CD8-positive, alpha-beta T cell (primary cell): ENCODE measurements at regions of chr5 and their contacts with region 1.

Region 1: DNA sequence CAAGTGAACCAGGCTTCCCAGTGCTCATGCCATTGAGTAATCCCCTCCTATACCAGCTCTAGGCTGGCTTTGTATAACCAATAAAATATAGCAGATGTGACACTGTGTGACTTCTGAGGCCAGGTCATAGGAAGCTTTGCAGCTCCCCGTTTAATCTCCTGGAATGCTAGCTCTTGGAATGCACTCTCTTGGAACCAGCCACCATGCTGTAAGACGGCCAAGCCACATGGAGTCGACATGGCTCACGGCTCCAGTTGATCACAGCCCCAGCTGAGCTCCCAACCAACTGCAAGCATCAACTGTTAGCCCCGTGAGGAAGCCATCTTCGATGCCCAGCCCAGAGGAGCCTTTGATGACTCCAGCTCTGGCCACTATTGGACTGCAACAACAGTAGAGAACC is 74.5 kb downstream of the SH3TC2 start:
- DNase-seq: no peak
- ATAC-seq: no peak
- H3K4me3 ChIP-seq: no peak overlapping the region
- H3K4me3 Mint-ChIP-seq: no peak overlapping the region
- H3K27ac ChIP-seq: no peak overlapping the region
- H3K27ac Mint-ChIP-seq: no peak overlapping the region
- H3K4me1 ChIP-seq: no peaks in the 10 kb centered on the region
- H3K4me1 Mint-ChIP-seq: no peaks in the 10 kb centered on the region
- H3K27me3 ChIP-seq: no peaks in the 10 kb centered on the region
- H3K27me3 Mint-ChIP-seq: peaks cover 18% of the 10 kb centered on the region
- CTCF ChIP-seq: no peak

Region 2: GRCh38 chr5:148912714-148913398 is 75.5 kb before region 1 on chr5:
- CTCF ChIA-PET with region 1: no interaction called
- POLR2A ChIA-PET with region 1: no interaction called
- intact Hi-C with region 1: no loop called
- DNase-seq: no peak
- ATAC-seq: no peak
- H3K4me3 ChIP-seq: no peak overlapping the region
- H3K4me3 Mint-ChIP-seq: no peak overlapping the region
- H3K27ac ChIP-seq: no peak overlapping the region
- H3K27ac Mint-ChIP-seq: no peak overlapping the region
- H3K4me1 ChIP-seq: no peaks in the 10 kb centered on the region
- H3K4me1 Mint-ChIP-seq: peaks cover 10% of the 10 kb centered on the region
- H3K27me3 ChIP-seq: no peaks in the 10 kb centered on the region
- H3K27me3 Mint-ChIP-seq: no peaks in the 10 kb centered on the region
- CTCF ChIP-seq: no peak

Region 3: DNA sequence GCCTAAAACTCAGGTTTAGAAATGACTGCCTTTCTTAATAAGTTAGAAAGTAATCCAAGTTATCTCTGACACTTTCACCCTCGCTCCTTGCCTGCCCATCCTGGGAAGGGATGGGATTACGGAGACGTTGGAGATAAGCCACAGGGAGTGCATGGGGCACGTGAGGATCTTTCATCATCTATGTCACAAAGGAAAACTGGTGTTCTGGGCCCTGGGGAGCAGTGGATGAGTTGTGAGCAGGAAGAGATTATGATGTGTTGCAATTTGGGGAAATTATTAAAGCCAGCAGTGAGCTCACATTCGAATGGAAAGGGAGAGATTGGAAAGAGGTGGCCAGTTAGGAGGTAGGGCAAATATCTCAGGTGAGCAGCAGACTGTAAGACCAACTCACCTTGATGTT is 296.2 kb after region 1 on chr5:
- CTCF ChIA-PET with region 1: no interaction called
- POLR2A ChIA-PET with region 1: no interaction called
- intact Hi-C with region 1: loop called in 1 of 2 experiments (anchors 5 kb)
- DNase-seq: no peak
- ATAC-seq: no peak
- H3K4me3 ChIP-seq: no peak overlapping the region
- H3K4me3 Mint-ChIP-seq: no peak overlapping the region
- H3K27ac ChIP-seq: no peak overlapping the region
- H3K27ac Mint-ChIP-seq: no peak overlapping the region
- H3K4me1 ChIP-seq: no peaks in the 10 kb centered on the region
- H3K4me1 Mint-ChIP-seq: no peaks in the 10 kb centered on the region
- H3K27me3 ChIP-seq: peaks cover 0 to 2% of the 10 kb centered on the region in 2 experiments
- H3K27me3 Mint-ChIP-seq: peaks cover 11% of the 10 kb centered on the region
- CTCF ChIP-seq: no peak

Region 4: GRCh38 chr5:150394131-150394530 is 1405.8 kb after region 1 on chr5:
- CTCF ChIA-PET with region 1: no interaction called
- POLR2A ChIA-PET with region 1: no interaction called
- intact Hi-C with region 1: no loop called
- DNase-seq: no peak
- ATAC-seq: no peak
- H3K4me3 ChIP-seq: no peak overlapping the region
- H3K4me3 Mint-ChIP-seq: no peak overlapping the region
- H3K27ac ChIP-seq: no peak overlapping the region
- H3K27ac Mint-ChIP-seq: no peak overlapping the region
- H3K4me1 ChIP-seq: no peaks in the 10 kb centered on the region
- H3K4me1 Mint-ChIP-seq: no peaks in the 10 kb centered on the region
- H3K27me3 ChIP-seq: no peaks in the 10 kb centered on the region
- H3K27me3 Mint-ChIP-seq: no peaks in the 10 kb centered on the region
- CTCF ChIP-seq: no peak